ENCODE measurements at regions of chr11 and their contacts with region 1.

Region 1: GRCh38 chr11:118791111-118791965 is at the start of gene DDX6:
- DNase-seq: peak; percentile 93 to 97 (median 97)
- ATAC-seq: peak; percentile 86 to 87
- H3K4me3 ChIP-seq: peak within 1 kb of the TSS; percentile 88
- H3K27ac ChIP-seq: peak within 1 kb of the TSS; percentile 100
- H3K4me1 ChIP-seq: peaks cover 3% of the 10 kb centered on the region
- H3K27me3 ChIP-seq: no peaks in the 10 kb centered on the region
- total RNA-seq, gene DDX6: 126 to 149 (median 139) TPM

Region 2: DNA sequence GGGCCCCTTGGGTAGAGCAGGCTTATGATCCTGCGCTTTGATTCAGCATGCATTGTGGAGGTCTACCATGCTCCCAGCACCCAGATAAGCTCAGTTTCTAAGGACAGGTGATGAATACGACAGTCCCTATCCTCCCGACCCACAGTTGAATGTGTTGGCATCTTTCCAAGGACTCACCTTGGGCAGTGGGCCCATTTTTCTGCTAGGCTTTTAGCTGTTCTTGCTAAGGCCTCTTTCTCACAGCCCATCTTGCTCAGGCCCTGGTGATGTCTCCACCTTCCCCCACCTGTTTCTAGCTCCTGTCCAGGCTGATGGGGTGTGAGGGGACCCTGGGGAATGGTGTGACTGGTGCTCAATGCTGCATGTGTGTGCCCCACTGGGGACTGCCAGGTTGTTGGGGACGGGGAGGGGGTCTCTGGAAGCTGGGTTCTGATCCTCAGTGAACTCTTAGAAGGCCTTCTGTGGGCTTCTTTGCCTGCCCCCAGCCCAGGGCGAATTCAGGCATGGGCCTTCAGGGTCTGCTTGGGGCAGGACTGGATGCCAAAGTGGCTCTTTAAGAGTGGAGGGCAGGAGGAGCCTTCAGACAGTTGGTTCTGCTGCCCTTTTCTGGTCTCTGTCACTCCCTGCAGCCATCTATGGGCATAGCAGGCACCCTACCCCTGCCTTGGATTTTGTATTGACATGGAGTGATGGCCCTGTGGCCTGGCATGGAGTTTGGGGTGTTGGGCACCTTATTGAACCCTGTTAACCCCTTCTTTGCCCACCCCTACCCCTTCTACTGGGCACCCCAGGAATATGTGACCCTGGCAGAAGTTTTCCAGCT is 150.8 kb before region 1 on chr11:
- intact Hi-C with region 1: no loop called
- DNase-seq: peak; percentile 7 to 41 (median 27)
- ATAC-seq: no peak
- H3K4me3 ChIP-seq: no peak overlapping the region
- H3K27ac ChIP-seq: no peak overlapping the region
- H3K4me1 ChIP-seq: peaks cover 3% of the 10 kb centered on the region
- H3K27me3 ChIP-seq: no peaks in the 10 kb centered on the region

Region 3: GRCh38 chr11:118679483-118679882 is 111.9 kb before region 1 on chr11 and contains the start of gene TREH:
- intact Hi-C with region 1: no loop called
- DNase-seq: no peak
- ATAC-seq: peak; percentile 29 to 38
- H3K4me3 ChIP-seq: no peak within 1 kb of the TSS
- H3K27ac ChIP-seq: no peak within 1 kb of the TSS
- H3K4me1 ChIP-seq: no peaks in the 10 kb centered on the region
- H3K27me3 ChIP-seq: no peaks in the 10 kb centered on the region
- total RNA-seq, gene TREH: not detected

Region 4: GRCh38 chr11:118689851-118690552 is 101.3 kb before region 1 on chr11:
- intact Hi-C with region 1: loop called in 2 of 4 experiments (anchors 5 to 10 kb)
- DNase-seq: peak; percentile 85 to 99 (median 99)
- ATAC-seq: peak; percentile 95 to 97
- H3K4me3 ChIP-seq: no peak overlapping the region
- H3K27ac ChIP-seq: no peak overlapping the region
- H3K4me1 ChIP-seq: no peaks in the 10 kb centered on the region
- H3K27me3 ChIP-seq: no peaks in the 10 kb centered on the region

Region 5: DNA sequence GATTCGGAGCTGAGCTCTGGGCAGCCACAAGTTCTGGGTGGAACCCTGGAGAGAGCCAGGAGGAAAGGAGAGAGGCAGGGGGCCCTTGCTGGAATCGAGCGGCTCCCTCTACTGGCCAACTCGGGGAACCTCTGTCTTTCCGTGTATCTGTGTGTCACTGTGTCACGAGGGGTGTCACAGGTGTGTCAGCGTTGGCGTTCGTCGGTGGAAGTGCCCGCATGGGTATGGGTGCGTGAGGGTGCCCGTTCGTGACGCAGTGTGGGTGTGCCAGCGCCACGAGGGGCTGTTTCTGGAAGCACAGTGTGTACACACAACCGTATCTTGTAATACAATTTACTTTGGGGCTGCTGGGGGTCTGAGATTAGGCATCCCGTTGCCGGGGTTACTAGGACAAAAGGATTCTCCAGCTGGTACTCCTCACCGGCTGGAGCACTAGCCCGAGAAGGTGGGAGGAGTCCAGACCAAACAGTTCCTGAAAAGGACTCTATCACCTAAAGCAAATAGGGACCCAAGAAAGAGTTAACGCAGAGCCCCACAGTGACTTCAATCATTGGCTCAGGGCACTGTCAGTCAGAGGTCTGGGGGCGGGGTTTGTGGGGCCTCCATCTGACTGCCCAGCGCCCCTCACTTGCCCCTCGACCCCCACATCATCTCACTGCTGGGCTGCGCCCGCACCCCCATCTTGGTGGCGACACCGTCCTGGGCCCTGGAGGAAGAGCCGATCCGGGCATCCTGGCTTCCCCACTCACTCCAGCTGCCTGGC is 137.0 kb after region 1 on chr11:
- intact Hi-C with region 1: loop called in 1 of 4 experiments (anchors 5 kb)
- DNase-seq: peak; percentile 92 to 95 (median 95)
- ATAC-seq: peak; percentile 79 to 82
- H3K4me3 ChIP-seq: peak overlapping the region; percentile 94
- H3K27ac ChIP-seq: peak overlapping the region; percentile 99
- H3K4me1 ChIP-seq: peaks cover 2% of the 10 kb centered on the region
- H3K27me3 ChIP-seq: no peaks in the 10 kb centered on the region